ENCODE measurements at regions of chr2 and their contacts with region 1.

Region 1: DNA sequence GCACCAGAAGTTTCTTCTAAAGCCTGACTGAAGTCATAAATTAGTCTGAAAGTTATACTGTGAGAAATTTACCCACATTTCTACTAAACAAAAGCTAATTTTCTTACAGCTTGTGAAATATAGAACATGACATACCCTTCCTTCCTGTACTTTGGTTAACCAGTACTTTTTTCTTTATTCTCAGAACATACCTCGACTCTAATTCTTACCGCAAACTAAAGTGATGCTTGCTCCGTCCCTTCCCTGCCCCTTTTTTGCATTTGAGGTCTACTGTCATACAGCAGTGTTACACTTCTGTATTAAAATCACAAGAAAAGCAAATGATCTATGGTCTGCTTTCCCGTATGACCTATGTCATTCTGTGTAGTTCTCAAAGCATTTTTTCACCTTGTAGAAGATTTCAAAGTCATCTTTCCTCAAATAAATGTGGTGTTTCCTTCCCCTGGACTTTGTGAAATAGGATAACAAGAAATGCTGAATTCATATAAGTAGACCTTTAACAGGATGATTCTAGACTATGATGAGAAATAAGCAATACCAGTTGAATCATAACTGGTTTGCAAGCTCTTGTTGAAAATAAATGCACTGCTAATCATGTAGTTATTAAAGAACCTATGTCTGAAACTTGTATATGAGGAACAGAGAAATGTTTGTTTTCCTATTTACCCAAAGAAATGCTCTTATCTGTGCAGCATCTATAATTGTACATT is 30.4 kb downstream of the CYTIP start:
- DNase-seq: peak in 1 of 3 donors; percentile 14
- H3K4me3 ChIP-seq: peak overlapping the region in 1 of 3 experiments; percentile 4
- H3K4me3 Mint-ChIP-seq: peak overlapping the region in 1 of 2 donors; percentile 39
- H3K27ac ChIP-seq: peak overlapping the region in 1 of 2 donors; percentile 78
- H3K27ac Mint-ChIP-seq: peak overlapping the region in 6 of 7 donors; percentile 8 to 92 (median 22)
- H3K4me1 ChIP-seq: peaks cover 59 to 77% of the 10 kb centered on the region in 2 donors
- H3K4me1 Mint-ChIP-seq: peaks cover 67% of the 10 kb centered on the region
- H3K27me3 ChIP-seq: no peaks in the 10 kb centered on the region
- H3K27me3 Mint-ChIP-seq: peaks cover 0 to 2% (median 0%) of the 10 kb centered on the region in 3 donors
- CTCF ChIP-seq: no peak

Region 2: DNA sequence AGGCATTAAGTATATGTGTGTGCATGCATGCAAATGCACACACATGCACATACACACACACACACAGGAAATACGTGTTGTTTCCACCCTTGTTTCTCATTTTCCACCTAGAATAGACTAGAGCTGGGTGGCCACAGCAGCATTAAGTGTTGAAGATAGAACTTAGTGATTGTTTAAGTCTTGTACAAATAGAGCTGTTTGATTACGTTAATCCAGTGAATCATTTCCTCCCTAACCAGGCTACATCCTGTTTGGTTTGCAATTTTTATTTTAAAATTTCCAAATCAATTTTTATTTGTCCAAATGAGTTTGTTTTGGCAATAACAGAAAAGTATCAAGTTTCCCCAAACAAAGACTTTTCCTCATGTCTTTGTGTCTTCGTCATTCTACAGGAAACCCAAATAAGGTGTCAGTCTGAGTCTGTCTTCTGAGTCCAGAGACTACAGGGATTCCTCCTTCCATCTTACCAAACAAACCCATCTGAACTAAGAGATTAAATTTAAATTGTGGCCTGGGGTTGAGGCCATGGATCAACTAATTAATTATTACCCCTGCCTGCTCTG is 230.6 kb before region 1 on chr2:
- intact Hi-C with region 1: no loop called
- DNase-seq: peak; percentile 38 to 68 (median 59)
- H3K4me3 ChIP-seq: peak overlapping the region in 1 of 3 experiments; percentile 29
- H3K4me3 Mint-ChIP-seq: peak overlapping the region in 1 of 2 donors; percentile 64
- H3K27ac ChIP-seq: peak overlapping the region in 1 of 2 donors; percentile 63
- H3K27ac Mint-ChIP-seq: peak overlapping the region; percentile 48 to 94 (median 88)
- H3K4me1 ChIP-seq: peaks cover 51 to 56% of the 10 kb centered on the region in 2 donors
- H3K4me1 Mint-ChIP-seq: peaks cover 56% of the 10 kb centered on the region
- H3K27me3 ChIP-seq: no peaks in the 10 kb centered on the region
- H3K27me3 Mint-ChIP-seq: peaks cover 0 to 2% (median 2%) of the 10 kb centered on the region in 3 donors
- CTCF ChIP-seq: no peak

Region 3: DNA sequence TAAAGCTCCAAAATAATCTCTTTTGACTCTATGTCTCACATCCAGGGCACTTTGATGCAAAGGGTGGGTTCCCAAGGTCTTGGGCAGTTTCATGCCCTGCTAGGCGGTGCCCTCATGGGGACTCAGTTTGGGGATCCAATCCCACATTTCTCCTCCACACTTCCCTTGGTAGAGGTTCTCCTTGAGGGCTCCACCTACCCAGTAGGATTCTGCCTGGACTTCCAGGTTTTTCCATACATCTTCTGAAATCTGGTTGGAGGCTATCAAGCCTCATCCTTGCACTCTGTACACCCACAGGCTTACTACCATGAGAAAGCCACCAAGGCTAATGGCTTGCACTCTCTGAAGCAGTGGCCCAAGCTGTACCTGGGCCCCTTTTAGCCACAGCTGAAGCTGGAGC is 38.1 kb before region 1 on chr2:
- intact Hi-C with region 1: no loop called
- DNase-seq: no peak
- H3K4me3 ChIP-seq: no peak overlapping the region
- H3K4me3 Mint-ChIP-seq: no peak overlapping the region
- H3K27ac ChIP-seq: no peak overlapping the region
- H3K27ac Mint-ChIP-seq: no peak overlapping the region
- H3K4me1 ChIP-seq: peaks cover 0 to 4% of the 10 kb centered on the region in 2 donors
- H3K4me1 Mint-ChIP-seq: peaks cover 8% of the 10 kb centered on the region
- H3K27me3 ChIP-seq: no peaks in the 10 kb centered on the region
- H3K27me3 Mint-ChIP-seq: no peaks in the 10 kb centered on the region
- CTCF ChIP-seq: no peak

Region 4: DNA sequence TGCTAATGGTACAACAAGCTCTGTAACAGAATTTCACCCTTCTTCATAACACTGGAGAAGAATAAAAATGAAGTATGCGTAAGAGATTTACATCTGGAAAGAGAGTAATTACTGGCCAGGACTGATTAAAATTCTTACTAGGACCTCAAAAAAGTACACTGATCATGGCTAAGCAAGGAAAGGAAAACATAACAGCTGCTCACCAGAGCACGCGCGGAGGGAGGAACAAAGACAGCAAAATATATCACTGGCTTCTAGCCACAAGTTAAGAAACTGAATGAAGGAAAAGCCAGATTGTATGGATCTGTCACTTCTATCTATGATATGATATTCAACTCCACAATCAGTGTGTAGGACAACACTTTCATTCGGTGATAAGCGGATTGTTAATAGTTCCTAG is 46.0 kb after region 1 on chr2:
- intact Hi-C with region 1: loop called (anchors 5 to 10 kb)
- DNase-seq: no peak
- H3K4me3 ChIP-seq: no peak overlapping the region
- H3K4me3 Mint-ChIP-seq: no peak overlapping the region
- H3K27ac ChIP-seq: no peak overlapping the region
- H3K27ac Mint-ChIP-seq: no peak overlapping the region
- H3K4me1 ChIP-seq: peaks cover 18 to 25% of the 10 kb centered on the region in 2 donors
- H3K4me1 Mint-ChIP-seq: peaks cover 21% of the 10 kb centered on the region
- H3K27me3 ChIP-seq: no peaks in the 10 kb centered on the region
- H3K27me3 Mint-ChIP-seq: no peaks in the 10 kb centered on the region
- CTCF ChIP-seq: no peak

Region 5: GRCh38 chr2:157468931-157469708 is 55.6 kb after region 1 on chr2:
- intact Hi-C with region 1: loop called (anchors 5 to 10 kb)
- DNase-seq: peak; percentile 92 to 97 (median 93)
- H3K4me3 ChIP-seq: peak overlapping the region; percentile 38 to 62 (median 43)
- H3K4me3 Mint-ChIP-seq: peak overlapping the region; percentile 37 to 87
- H3K27ac ChIP-seq: peak overlapping the region; percentile 83 to 100
- H3K27ac Mint-ChIP-seq: peak overlapping the region; percentile 98 to 100 (median 99)
- H3K4me1 ChIP-seq: peaks cover 37 to 59% of the 10 kb centered on the region in 2 donors
- H3K4me1 Mint-ChIP-seq: peaks cover 51% of the 10 kb centered on the region
- H3K27me3 ChIP-seq: no peaks in the 10 kb centered on the region
- H3K27me3 Mint-ChIP-seq: no peaks in the 10 kb centered on the region
- CTCF ChIP-seq: no peak

Region 6: DNA sequence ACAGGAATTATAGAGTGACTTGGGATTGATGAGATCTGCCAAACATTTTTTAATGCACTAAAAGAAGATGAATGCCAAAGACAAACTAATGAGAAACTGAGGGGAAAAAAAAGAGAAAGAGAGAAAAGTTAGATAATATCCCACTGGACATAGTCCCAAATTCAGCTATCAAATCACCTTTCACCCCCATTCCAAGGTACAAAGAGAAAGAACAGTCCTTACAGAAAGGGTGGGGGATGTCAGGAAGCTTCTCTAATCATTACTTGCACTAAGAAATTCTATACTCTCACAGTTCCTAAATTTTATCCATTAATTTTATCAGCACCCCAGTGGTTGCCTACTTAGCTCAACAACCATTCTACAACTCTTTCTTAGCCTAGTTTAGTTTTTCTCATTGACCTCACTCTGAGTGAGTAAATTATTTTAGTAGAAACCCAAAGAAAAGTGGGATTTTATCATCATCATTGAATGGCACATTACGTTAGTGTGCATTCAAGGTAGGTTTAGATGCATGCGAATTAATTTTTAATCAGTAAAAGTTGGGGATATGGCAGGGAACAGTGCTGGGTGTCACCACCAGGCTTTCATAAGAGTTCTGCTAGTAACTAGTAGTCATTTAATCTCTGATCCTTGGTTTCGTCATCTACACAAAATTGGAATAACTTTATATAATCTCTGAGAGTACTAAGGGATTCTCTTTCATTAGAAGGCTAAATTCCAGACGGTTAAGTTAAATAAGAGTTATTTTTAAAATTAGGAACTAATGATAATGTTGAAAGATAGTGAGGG is 115.7 kb after region 1 on chr2:
- intact Hi-C with region 1: no loop called
- DNase-seq: no peak
- H3K4me3 ChIP-seq: no peak overlapping the region
- H3K4me3 Mint-ChIP-seq: no peak overlapping the region
- H3K27ac ChIP-seq: no peak overlapping the region
- H3K27ac Mint-ChIP-seq: no peak overlapping the region
- H3K4me1 ChIP-seq: no peaks in the 10 kb centered on the region
- H3K4me1 Mint-ChIP-seq: no peaks in the 10 kb centered on the region
- H3K27me3 ChIP-seq: no peaks in the 10 kb centered on the region
- H3K27me3 Mint-ChIP-seq: peaks cover 0 to 1% (median 0%) of the 10 kb centered on the region in 3 donors
- CTCF ChIP-seq: no peak

Region 7: GRCh38 chr2:159226059-159226461 is 1812.6 kb after region 1 on chr2:
- intact Hi-C with region 1: no loop called
- DNase-seq: peak; percentile 73 to 88 (median 84)
- H3K4me3 ChIP-seq: no peak overlapping the region
- H3K4me3 Mint-ChIP-seq: no peak overlapping the region
- H3K27ac ChIP-seq: peak overlapping the region in 1 of 2 donors; percentile 70
- H3K27ac Mint-ChIP-seq: peak overlapping the region in 5 of 7 donors; percentile 42 to 79 (median 68)
- H3K4me1 ChIP-seq: peaks cover 12 to 13% of the 10 kb centered on the region in 2 donors
- H3K4me1 Mint-ChIP-seq: peaks cover 9% of the 10 kb centered on the region
- H3K27me3 ChIP-seq: no peaks in the 10 kb centered on the region
- H3K27me3 Mint-ChIP-seq: no peaks in the 10 kb centered on the region
- CTCF ChIP-seq: no peak